Gastrocnemius medialis (tissue), 4 donors: ENCODE measurements at regions of chr5 and their contacts with region 1.

Region 1: DNA sequence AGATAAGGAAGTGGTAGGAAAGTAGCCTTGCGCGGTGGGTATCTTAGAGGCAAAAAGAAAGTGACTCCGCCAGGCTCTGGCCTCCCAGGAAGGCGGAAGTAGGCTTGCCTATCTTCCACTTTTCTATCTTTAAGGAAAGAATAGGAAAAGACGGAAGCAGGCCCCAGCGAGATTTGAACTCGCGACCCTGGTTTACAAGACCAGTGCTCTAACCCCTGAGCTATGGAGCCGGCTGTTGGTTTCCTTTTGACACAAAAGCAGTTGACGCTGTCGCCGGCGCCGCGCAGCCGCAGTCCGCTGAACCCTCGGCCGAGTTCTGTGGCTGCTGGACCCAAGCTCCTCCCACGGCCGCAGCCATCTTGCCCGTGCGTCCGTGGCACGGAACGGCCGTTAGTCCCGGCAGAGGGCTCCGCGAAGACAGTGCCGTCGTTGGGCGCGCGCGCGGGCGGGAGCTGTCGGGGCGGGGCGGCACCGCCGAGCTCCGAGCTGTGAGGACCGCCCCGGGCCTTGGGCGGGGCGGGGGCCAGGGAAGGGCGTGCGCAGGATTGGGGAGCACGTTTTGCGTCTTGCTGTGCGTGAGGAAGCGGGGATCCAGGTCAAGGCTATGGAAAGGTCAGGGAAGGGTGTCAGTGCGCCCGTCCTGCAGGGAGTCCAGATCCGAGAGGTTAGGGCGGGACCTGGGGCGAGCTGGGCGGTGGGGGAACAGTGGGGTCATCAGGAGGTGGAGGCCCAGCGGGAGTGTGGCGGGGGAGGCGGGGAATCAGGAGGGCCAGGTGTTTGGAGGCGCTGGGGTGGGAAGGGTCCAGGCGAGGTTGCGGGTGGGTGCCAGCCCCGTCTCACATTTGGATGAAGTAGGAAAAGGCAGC is 13.2 kb downstream of the TRIM7 start:
- DNase-seq: peak; percentile 90 to 92
- ATAC-seq: peak; percentile 73 to 84
- H3K4me3 ChIP-seq: peak overlapping the region; percentile 67 to 97 (median 77)
- H3K27ac ChIP-seq: peak overlapping the region; percentile 89 to 98 (median 93)
- H3K4me1 ChIP-seq: peaks cover 14 to 22% of the 10 kb centered on the region in 2 donors
- H3K27me3 ChIP-seq: no peaks in the 10 kb centered on the region
- CTCF ChIP-seq: peak in 1 of 5 experiments; percentile 11
- POLR2A ChIP-seq: peak; percentile 57 to 78

Region 2: GRCh38 chr5:180605554-180606214 is 586.1 kb before region 1 on chr5:
- in situ Hi-C with region 1: no loop called
- intact Hi-C with region 1: no loop called
- DNase-seq: no peak
- ATAC-seq: no peak
- H3K4me3 ChIP-seq: no peak overlapping the region
- H3K27ac ChIP-seq: no peak overlapping the region
- H3K4me1 ChIP-seq: no peaks in the 10 kb centered on the region
- H3K27me3 ChIP-seq: peaks cover 0 to 3% (median 0%) of the 10 kb centered on the region in 3 donors
- CTCF ChIP-seq: peak in 2 of 5 experiments; percentile 30 to 31
- POLR2A ChIP-seq: no peak

Region 3: GRCh38 chr5:180810210-180810958 is 381.4 kb before region 1 on chr5:
- in situ Hi-C with region 1: no loop called
- intact Hi-C with region 1: loop called (anchors 2 kb)
- DNase-seq: peak; percentile 96
- ATAC-seq: peak; percentile 83 to 86
- H3K4me3 ChIP-seq: peak overlapping the region; percentile 74 to 94 (median 79)
- H3K27ac ChIP-seq: peak overlapping the region; percentile 94 to 100 (median 100)
- H3K4me1 ChIP-seq: peaks cover 48 to 52% of the 10 kb centered on the region in 2 donors
- H3K27me3 ChIP-seq: no peaks in the 10 kb centered on the region
- CTCF ChIP-seq: no peak
- POLR2A ChIP-seq: peak; percentile 75 to 85

Region 4: GRCh38 chr5:181207214-181208107 is 15.7 kb after region 1 on chr5:
- in situ Hi-C with region 1: no loop called
- intact Hi-C with region 1: loop called (anchors 1 kb)
- DNase-seq: peak in 1 of 2 donors; percentile 65
- ATAC-seq: peak; percentile 12 to 15
- H3K4me3 ChIP-seq: peak overlapping the region; percentile 69 to 86 (median 80)
- H3K27ac ChIP-seq: peak overlapping the region; percentile 95 to 99 (median 97)
- H3K4me1 ChIP-seq: peaks cover 30 to 38% of the 10 kb centered on the region in 2 donors
- H3K27me3 ChIP-seq: no peaks in the 10 kb centered on the region
- CTCF ChIP-seq: no peak
- POLR2A ChIP-seq: peak in 1 of 2 donors; percentile 18

Region 5: DNA sequence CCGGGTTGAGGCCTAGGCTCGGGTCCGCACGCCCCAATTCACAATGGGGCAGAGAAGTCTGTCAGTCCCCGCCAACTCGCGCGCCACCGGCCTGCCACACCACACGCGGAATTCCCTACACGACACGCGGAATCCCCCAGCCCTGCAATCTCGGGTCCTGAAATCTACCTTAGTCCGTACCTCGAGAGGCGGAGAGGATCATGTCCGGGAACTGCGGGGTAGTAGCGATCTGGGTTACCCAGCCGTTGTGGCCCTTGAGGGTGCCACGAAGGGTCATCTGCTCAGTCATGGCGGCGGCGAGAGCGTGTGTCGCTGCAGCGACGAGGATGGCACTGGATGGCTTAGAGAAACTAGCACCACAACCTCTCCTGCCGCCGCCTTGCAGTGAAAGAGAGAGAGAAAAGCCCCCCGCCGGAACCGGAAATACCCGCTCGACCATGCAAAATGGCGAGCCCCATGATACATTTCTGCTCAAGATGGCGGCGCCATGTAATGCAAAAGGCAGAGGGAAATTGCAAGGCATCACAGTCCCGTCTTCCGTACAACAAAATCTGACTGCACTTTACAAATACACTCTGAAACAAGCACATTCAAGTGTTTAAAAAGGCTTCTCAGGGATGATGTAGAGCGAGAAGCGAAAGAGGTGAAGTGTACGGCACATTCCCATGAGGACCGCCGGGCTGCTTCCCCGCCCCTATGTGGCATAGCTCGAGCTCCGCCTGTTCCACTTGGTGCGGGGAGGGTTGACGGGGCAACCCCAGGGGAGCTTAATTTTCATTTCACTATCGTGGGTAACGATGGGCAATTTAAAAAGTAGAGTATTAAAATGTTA is 52.0 kb after region 1 on chr5 and contains the start of gene RACK1:
- in situ Hi-C with region 1: no loop called
- intact Hi-C with region 1: loop called (anchors 1 kb)
- DNase-seq: peak; percentile 87 to 89
- ATAC-seq: peak; percentile 60 to 72
- H3K4me3 ChIP-seq: peak within 1 kb of the TSS; percentile 76 to 96 (median 80)
- H3K27ac ChIP-seq: peak within 1 kb of the TSS; percentile 94 to 99 (median 96)
- H3K4me1 ChIP-seq: peaks cover 39 to 50% of the 10 kb centered on the region in 2 donors
- H3K27me3 ChIP-seq: no peaks in the 10 kb centered on the region
- CTCF ChIP-seq: peak in 2 of 5 experiments; percentile 11 to 13
- POLR2A ChIP-seq: peak; percentile 79 to 81
- total RNA-seq, gene RACK1: 1,697 to 2,187 (median 1,957) TPM